ENCODE measurements at regions of chr4 and their contacts with region 1.

Region 1: GRCh38 chr4:2220016-2220630 is 21.8 kb downstream of the HAUS3 start:
- DNase-seq: peak; percentile 60 to 81 (median 72)
- H3K4me3 ChIP-seq: no peak overlapping the region
- H3K27ac ChIP-seq: no peak overlapping the region
- H3K4me1 ChIP-seq: peaks cover 0 to 3% (median under 1%) of the 10 kb centered on the region in 4 experiments
- H3K27me3 ChIP-seq: no peaks in the 10 kb centered on the region

Region 2: GRCh38 chr4:2168469-2169319 is 51.4 kb before region 1 on chr4:
- CTCF ChIA-PET with region 1: no interaction called
- POLR2A ChIA-PET with region 1: no interaction called
- DNase-seq: no peak
- H3K4me3 ChIP-seq: no peak overlapping the region
- H3K27ac ChIP-seq: no peak overlapping the region
- H3K4me1 ChIP-seq: peaks cover 0 to 8% (median 4%) of the 10 kb centered on the region in 4 experiments
- H3K27me3 ChIP-seq: peaks cover 0 to 3% (median 0%) of the 10 kb centered on the region in 5 experiments

Region 3: DNA sequence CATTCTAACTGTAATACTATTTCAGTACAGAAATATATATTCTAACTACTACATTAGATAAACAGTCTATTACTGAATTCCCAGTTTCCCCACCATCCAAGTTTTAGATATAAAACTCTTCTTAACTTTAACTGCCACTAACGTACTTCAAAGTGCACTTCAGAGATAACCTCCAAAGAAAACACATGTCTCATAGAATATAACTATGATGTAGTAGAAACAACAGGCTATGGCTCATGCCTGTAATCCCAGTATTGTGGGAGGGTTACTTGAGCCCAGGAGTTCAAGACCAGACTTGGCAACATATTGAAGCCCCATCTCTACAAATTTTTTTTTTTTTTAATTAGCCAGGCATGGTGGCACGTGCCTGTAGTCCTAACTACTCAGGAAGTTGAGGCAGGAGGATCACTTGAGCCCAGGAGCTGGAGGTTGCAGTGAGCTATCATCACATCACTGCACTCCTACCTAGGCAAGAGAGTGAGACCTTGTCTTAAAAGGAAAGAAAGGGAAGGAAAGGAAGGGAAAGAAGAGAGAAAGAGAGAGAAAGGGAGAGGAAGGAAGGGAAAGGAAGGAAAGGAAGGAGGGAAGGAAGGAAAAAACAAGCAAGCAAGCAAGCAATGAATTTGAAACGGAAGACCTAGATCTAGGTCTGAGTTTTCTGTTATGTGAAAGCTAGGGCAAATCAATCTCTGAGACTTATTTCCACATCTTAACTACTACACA is 17.0 kb after region 1 on chr4:
- CTCF ChIA-PET with region 1: interaction called, 12 read pairs
- POLR2A ChIA-PET with region 1: interaction called, 4 read pairs
- DNase-seq: no peak
- H3K4me3 ChIP-seq: no peak overlapping the region
- H3K27ac ChIP-seq: no peak overlapping the region
- H3K4me1 ChIP-seq: peaks cover 16 to 28% (median 23%) of the 10 kb centered on the region in 4 experiments
- H3K27me3 ChIP-seq: no peaks in the 10 kb centered on the region

Measured in common myeloid progenitor, CD34-positive (primary cell).